IMR-90 (cell line): ENCODE measurements at regions of chr18 and their contacts with region 1.

Region 1: DNA sequence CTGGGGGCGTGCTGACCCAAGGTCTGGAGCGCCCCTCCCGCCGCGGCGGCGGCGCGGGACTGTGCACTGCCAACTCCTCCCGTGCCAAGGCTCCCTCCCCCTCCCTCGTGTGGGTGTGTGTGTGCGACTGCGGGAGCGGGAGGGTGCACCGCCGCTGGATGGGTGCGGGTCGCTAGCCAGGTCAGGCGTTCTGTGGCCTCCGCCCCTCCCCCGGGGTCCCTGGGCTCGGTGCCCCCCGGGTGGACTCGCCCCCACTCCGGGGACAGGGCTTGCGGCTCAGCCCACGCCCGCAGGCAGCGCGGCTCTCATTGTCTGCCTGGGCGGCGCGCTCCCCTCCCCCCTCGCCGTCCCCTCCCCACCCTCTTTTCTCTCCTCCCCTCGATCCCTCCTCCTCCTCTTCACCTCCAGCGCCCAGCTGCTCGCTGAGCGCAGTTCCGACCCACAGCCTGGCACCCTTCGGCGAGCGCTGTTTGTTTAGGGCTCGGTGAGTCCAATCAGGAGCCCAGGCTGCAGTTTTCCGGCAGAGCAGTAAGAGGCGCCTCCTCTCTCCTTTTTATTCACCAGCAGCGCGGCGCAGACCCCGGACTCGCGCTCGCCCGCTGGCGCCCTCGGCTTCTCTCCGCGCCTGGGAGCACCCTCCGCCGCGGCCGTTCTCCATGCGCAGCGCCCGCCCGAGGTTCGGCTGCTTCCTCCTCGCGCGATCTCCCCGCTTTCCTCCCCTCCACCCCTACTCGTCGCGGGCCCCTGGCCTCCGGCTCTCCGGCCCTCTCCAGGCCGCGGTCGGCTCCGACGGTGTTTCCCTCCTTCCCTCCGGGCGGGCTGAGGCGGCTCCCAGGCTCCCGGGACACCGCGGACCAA is at the start of gene GATA6:
- DNase-seq: peak; percentile 91
- ATAC-seq: peak; percentile 78
- H3K4me3 ChIP-seq: peak within 1 kb of the TSS; percentile 77
- H3K27ac ChIP-seq: peak within 1 kb of the TSS; percentile 75
- H3K4me1 ChIP-seq: peaks cover 12% of the 10 kb centered on the region
- H3K27me3 ChIP-seq: peaks cover 45% of the 10 kb centered on the region
- CTCF ChIP-seq: peak; percentile 65
- POLR2A ChIP-seq: peak; percentile 98
- RAD21 ChIP-seq: peak; percentile 59
- total RNA-seq, gene GATA6: 2.5 and 3.3 TPM in 2 replicates

Region 2: GRCh38 chr18:21914739-21915319 is 254.4 kb before region 1 on chr18:
- CTCF ChIA-PET with region 1: no interaction called
- POLR2A ChIA-PET with region 1: no interaction called
- dilution Hi-C with region 1: no loop called
- in situ Hi-C with region 1: no loop called
- intact Hi-C with region 1: loop called (anchors 2 kb)
- DNase-seq: peak; percentile 62
- ATAC-seq: peak; percentile 92
- H3K4me3 ChIP-seq: no peak overlapping the region
- H3K27ac ChIP-seq: no peak overlapping the region
- H3K4me1 ChIP-seq: no peaks in the 10 kb centered on the region
- H3K27me3 ChIP-seq: peaks cover 16% of the 10 kb centered on the region
- CTCF ChIP-seq: peak; percentile 86
- POLR2A ChIP-seq: no peak
- RAD21 ChIP-seq: peak; percentile 85

Region 3: DNA sequence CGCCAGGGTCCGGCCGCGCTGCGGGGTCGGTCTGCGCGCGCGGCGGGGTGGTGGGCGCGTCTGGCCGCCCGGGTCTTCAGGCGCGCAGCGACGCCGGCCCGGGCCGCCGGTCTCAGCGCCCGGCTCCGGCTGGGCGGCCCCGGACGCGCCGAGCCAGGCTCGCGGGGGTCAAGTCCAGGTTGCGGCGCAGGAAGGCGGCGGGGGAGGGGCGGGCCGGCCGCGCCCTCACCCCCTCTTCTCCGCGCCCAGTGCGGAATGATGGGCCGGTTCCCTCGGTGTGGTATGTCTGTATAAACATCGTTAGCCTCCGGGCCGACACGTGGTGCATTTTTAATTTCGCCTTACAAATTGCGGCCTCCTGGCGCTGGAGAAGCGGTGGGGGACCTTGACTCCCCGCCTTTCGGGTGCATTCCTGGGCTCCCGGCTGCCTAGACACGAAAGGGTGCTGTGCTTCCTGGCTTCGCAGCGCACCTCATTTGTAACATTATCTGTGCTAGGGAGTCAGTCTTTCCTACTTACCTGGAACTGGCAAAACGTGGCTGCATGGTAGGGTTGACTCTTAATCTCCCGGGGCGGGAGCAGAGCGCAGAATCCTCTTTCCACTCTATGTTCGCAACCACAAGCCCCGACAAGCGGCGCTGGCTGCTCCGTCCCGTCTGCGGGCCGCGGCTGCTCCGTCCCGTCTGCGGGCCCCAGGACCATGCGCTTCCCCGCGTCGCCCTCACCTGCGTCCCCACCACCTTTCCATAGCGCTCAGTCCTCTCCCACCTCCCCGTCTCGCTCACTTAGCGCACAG is 179.5 kb after region 1 on chr18:
- CTCF ChIA-PET with region 1: no interaction called
- POLR2A ChIA-PET with region 1: no interaction called
- dilution Hi-C with region 1: no loop called
- in situ Hi-C with region 1: no loop called
- intact Hi-C with region 1: loop called (anchors 2 kb)
- DNase-seq: peak; percentile 42
- ATAC-seq: peak; percentile 77
- H3K4me3 ChIP-seq: peak overlapping the region; percentile 25
- H3K27ac ChIP-seq: peak overlapping the region; percentile 74
- H3K4me1 ChIP-seq: peaks cover 22% of the 10 kb centered on the region
- H3K27me3 ChIP-seq: no peaks in the 10 kb centered on the region
- CTCF ChIP-seq: no peak
- POLR2A ChIP-seq: no peak
- RAD21 ChIP-seq: no peak

Region 4: DNA sequence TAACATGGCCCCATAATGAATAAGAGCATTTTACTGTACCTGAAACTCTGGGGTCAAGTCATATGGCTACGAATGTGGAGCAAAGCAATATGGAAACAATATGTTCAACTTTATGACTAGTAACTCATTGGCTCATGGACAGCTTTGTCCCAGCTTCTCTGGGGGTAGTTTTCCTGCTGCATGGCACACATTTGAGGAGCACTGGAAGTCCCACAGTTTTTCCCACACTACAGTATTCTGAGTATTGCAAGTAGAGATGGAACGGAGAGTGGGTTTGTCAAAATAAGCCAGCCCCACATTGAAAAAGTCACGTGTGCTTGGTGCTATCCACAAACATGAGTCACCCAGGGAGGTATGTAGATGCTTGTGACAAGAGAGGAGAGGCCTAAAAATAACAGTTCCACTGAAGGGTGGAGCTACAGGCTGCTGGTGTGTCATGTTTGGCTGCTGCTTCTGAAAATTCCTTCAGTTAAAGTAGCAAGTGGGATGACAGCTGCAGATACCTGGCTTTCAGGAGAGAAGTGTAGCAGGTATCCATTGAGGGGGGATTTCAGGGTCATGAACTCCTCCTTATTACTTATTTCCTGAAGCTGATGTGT is 296.7 kb after region 1 on chr18:
- CTCF ChIA-PET with region 1: interaction called, 3 read pairs
- POLR2A ChIA-PET with region 1: no interaction called
- dilution Hi-C with region 1: no loop called
- in situ Hi-C with region 1: no loop called
- intact Hi-C with region 1: loop called (anchors 2 kb)
- DNase-seq: peak; percentile 98
- ATAC-seq: peak; percentile 76
- H3K4me3 ChIP-seq: no peak overlapping the region
- H3K27ac ChIP-seq: 0 out of 2 replicates have a peak overlapping the region, but pooled peaks have one; percentile 3
- H3K4me1 ChIP-seq: peaks cover 28% of the 10 kb centered on the region
- H3K27me3 ChIP-seq: no peaks in the 10 kb centered on the region
- CTCF ChIP-seq: no peak
- POLR2A ChIP-seq: peak; percentile 15; the same call in 1 of the 2 replicates
- RAD21 ChIP-seq: peak; percentile 21

Region 5: DNA sequence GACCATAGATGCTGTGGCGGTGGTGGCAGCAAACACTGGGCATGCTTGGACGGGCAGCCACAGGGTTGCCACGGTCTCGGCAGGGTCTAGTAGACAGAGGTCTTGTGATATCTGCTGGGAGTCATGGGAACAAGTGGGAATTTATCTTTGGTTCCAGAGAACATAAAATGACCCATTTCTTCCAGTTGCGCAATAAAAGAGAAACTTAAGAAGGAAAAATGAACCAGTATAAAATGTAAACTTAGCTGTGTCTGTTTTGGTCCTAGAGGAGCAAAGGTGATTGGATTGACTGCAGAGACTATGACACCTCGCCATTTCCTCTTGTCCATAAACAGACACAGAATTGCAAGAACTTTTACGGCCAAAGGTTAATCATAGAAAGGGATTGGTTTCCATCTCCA is 631.3 kb after region 1 on chr18:
- CTCF ChIA-PET with region 1: no interaction called
- POLR2A ChIA-PET with region 1: no interaction called
- dilution Hi-C with region 1: no loop called
- in situ Hi-C with region 1: no loop called
- intact Hi-C with region 1: loop called (anchors 5 kb)
- DNase-seq: peak; percentile 28
- ATAC-seq: no peak
- H3K4me3 ChIP-seq: no peak overlapping the region
- H3K27ac ChIP-seq: no peak overlapping the region
- H3K4me1 ChIP-seq: 0 out of 2 replicates have a peak, but pooled peaks cover 2% of the 10 kb centered on the region
- H3K27me3 ChIP-seq: no peaks in the 10 kb centered on the region
- CTCF ChIP-seq: no peak
- POLR2A ChIP-seq: no peak
- RAD21 ChIP-seq: no peak